Dorsolateral prefrontal cortex (tissue), 120 donors: ENCODE measurements at regions of chr12 and their contacts with region 1.

Region 1: GRCh38 chr12:122116707-122117535 is 38.4 kb downstream of the MLXIP start:
- DNase-seq: peak; percentile 44 to 95 (median 90)
- H3K4me3 ChIP-seq: peak overlapping the region in 38 of 59 donors; percentile 0 to 61 (median 32)
- H3K27ac ChIP-seq: peak overlapping the region; percentile 41 to 97 (median 90)
- H3K27me3 ChIP-seq: no peaks in the 10 kb centered on the region
- CTCF ChIP-seq: peak in 45 of 56 donors; percentile 5 to 69 (median 41)

Region 2: GRCh38 chr12:122078141-122079032 is 38.5 kb before region 1 on chr12 and contains the start of gene MLXIP:
- intact Hi-C with region 1: loop called in 1 of 2 experiments (anchors 1 kb)
- DNase-seq: peak; percentile 89 to 97 (median 94)
- H3K4me3 ChIP-seq: peak within 1 kb of the TSS; percentile 63 to 96 (median 82)
- H3K27ac ChIP-seq: peak within 1 kb of the TSS in 57 of 59 donors; percentile 12 to 87 (median 69)
- H3K27me3 ChIP-seq: no peaks in the 10 kb centered on the region
- CTCF ChIP-seq: peak in 17 of 56 donors; percentile 5 to 46 (median 22)
- total RNA-seq, gene MLXIP: 22.2 to 78.4 (median 49.7) TPM

Region 3: GRCh38 chr12:122097927-122098756 is 18.8 kb before region 1 on chr12:
- intact Hi-C with region 1: loop called in 1 of 2 experiments (anchors 1 kb)
- DNase-seq: peak in 9 of 10 donors; percentile 52 to 82 (median 77)
- H3K4me3 ChIP-seq: peak overlapping the region in 34 of 59 donors; percentile 4 to 50 (median 28)
- H3K27ac ChIP-seq: peak overlapping the region; percentile 6 to 95 (median 85)
- H3K27me3 ChIP-seq: no peaks in the 10 kb centered on the region
- CTCF ChIP-seq: peak in 15 of 56 donors; percentile 7 to 41 (median 19)